Endothelial cell of umbilical vein (primary cell): ENCODE measurements at regions of chr11 and their contacts with region 1.

Region 1: DNA sequence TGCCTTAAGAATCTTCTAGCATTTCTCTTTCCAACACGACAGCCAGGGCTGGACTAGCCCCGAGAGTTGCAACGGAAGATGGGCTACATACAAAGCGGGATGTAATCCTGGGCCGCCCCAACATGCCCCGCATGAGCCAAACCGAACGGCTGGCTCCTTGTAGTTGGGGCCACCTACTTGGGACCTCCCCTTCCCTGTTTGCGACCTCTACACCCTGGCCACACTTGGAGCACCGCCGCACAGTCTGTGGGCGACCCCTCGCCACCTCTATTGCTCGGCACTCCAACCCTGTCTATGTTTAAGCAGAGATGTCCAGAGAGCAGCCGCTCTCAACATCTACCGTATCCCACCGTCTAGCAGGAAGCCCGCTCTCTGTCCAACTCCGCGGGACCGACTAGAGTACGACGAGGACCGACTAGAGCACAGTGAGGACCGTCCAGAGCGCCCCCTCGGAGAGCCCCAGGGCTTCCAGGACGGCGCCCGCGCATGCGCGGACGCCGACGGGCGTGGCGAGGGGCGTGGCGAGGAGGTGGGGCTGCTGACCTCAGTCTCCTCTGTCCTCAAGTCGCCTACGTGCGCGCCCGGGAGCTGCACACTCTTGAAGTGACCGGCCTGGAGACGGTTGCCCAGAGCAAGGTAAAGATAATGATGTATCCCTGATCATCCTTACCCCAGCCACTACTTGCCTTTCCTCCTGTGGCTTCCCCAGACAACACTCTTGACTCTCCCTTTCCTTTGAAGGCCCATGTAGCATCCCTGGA is 32.3 kb downstream of the NEAT1 start:
- DNase-seq: peak; percentile 93
- H3K4me3 ChIP-seq: peak overlapping the region; percentile 27 to 60 (median 53)
- H3K27ac ChIP-seq: peak overlapping the region; percentile 51
- H3K4me1 ChIP-seq: no peaks in the 10 kb centered on the region
- H3K27me3 ChIP-seq: no peaks in the 10 kb centered on the region
- CTCF ChIP-seq: peak in 1 of 2 donors; percentile 37
- POLR2A ChIP-seq: peak; percentile 94

Region 2: GRCh38 chr11:65414776-65415175 is 40.1 kb before region 1 on chr11:
- CTCF ChIA-PET with region 1: no interaction called
- POLR2A ChIA-PET with region 1: no interaction called
- dilution Hi-C with region 1: no loop called
- intact Hi-C with region 1: no loop called
- DNase-seq: no peak
- H3K4me3 ChIP-seq: no peak overlapping the region
- H3K27ac ChIP-seq: no peak overlapping the region
- H3K4me1 ChIP-seq: peaks cover 36% of the 10 kb centered on the region
- H3K27me3 ChIP-seq: no peaks in the 10 kb centered on the region
- CTCF ChIP-seq: no peak
- POLR2A ChIP-seq: no peak

Region 3: GRCh38 chr11:65425105-65425970 is 29.5 kb before region 1 on chr11:
- CTCF ChIA-PET with region 1: no interaction called
- POLR2A ChIA-PET with region 1: no interaction called
- dilution Hi-C with region 1: no loop called
- intact Hi-C with region 1: no loop called
- DNase-seq: peak; percentile 65
- H3K4me3 ChIP-seq: peak overlapping the region; percentile 52 to 95 (median 67)
- H3K27ac ChIP-seq: peak overlapping the region; percentile 99
- H3K4me1 ChIP-seq: peaks cover 47% of the 10 kb centered on the region
- H3K27me3 ChIP-seq: no peaks in the 10 kb centered on the region
- CTCF ChIP-seq: no peak
- POLR2A ChIP-seq: peak; percentile 95

Region 4: DNA sequence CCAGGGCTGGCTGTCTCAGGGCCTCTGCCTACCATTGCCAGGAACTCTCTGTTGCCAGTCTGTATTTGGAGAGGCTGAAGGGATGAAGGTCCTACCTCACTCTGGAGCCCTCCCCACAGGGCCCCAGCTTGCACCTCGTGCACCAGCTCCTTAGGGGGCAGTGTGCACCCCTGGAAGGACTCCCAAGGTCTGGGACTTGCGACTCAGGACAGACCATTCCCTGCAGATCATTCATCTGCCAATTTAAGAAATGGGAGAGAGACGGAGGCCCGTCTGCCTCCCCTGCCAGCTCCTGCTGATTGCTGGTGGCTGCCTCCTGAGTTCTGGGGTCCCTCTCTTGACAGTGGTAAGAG is 16.5 kb after region 1 on chr11:
- CTCF ChIA-PET with region 1: interaction called, 10 read pairs
- POLR2A ChIA-PET with region 1: no interaction called
- dilution Hi-C with region 1: no loop called
- intact Hi-C with region 1: loop called (anchors 2 kb)
- DNase-seq: peak; percentile 83
- H3K4me3 ChIP-seq: no peak overlapping the region
- H3K27ac ChIP-seq: peak overlapping the region; percentile 89
- H3K4me1 ChIP-seq: peaks cover 19% of the 10 kb centered on the region
- H3K27me3 ChIP-seq: no peaks in the 10 kb centered on the region
- CTCF ChIP-seq: peak; percentile 70 to 78
- POLR2A ChIP-seq: no peak

Region 5: GRCh38 chr11:65477149-65477965 is 22.5 kb after region 1 on chr11:
- CTCF ChIA-PET with region 1: no interaction called
- POLR2A ChIA-PET with region 1: no interaction called
- dilution Hi-C with region 1: no loop called
- intact Hi-C with region 1: loop called (anchors 2 kb)
- DNase-seq: peak; percentile 94
- H3K4me3 ChIP-seq: peak overlapping the region; percentile 35 to 56 (median 54)
- H3K27ac ChIP-seq: peak overlapping the region; percentile 88
- H3K4me1 ChIP-seq: peaks cover 26% of the 10 kb centered on the region
- H3K27me3 ChIP-seq: no peaks in the 10 kb centered on the region
- CTCF ChIP-seq: no peak
- POLR2A ChIP-seq: peak; percentile 95